Activated CD4-positive, alpha-beta T cell treated with anti-CD3 and anti-CD28 coated beads, Interleukin-2, amount 10 ng/mL, durations not matched to agents 7 days and 5 days (primary cell): ENCODE measurements at regions of chr11 and their contacts with region 1.

Region 1: GRCh38 chr11:118883368-118884071 is at the start of gene CXCR5:
- DNase-seq: no peak
- H3K4me3 Mint-ChIP-seq: peak within 1 kb of the TSS; percentile 14
- H3K27ac Mint-ChIP-seq: peak within 1 kb of the TSS; percentile 52
- H3K4me1 Mint-ChIP-seq: peaks cover 56% of the 10 kb centered on the region
- H3K27me3 Mint-ChIP-seq: no peaks in the 10 kb centered on the region
- total RNA-seq, gene CXCR5: 0.50 to 0.52 TPM

Region 2: GRCh38 chr11:118652681-118653181 is 230.8 kb before region 1 on chr11:
- CTCF ChIA-PET with region 1: no interaction called
- POLR2A ChIA-PET with region 1: no interaction called
- DNase-seq: no peak
- H3K4me3 Mint-ChIP-seq: no peak overlapping the region
- H3K27ac Mint-ChIP-seq: no peak overlapping the region
- H3K4me1 Mint-ChIP-seq: peaks cover 9% of the 10 kb centered on the region
- H3K27me3 Mint-ChIP-seq: no peaks in the 10 kb centered on the region

Region 3: GRCh38 chr11:118895142-118896039 is 11.9 kb after region 1 on chr11:
- CTCF ChIA-PET with region 1: interaction called, 30 read pairs
- POLR2A ChIA-PET with region 1: no interaction called
- DNase-seq: peak; percentile 75
- H3K4me3 Mint-ChIP-seq: peak overlapping the region; percentile 64
- H3K27ac Mint-ChIP-seq: peak overlapping the region; percentile 88
- H3K4me1 Mint-ChIP-seq: peaks cover 76% of the 10 kb centered on the region
- H3K27me3 Mint-ChIP-seq: no peaks in the 10 kb centered on the region